ENCODE measurements at regions of chr11 and their contacts with region 1.

Region 1: DNA sequence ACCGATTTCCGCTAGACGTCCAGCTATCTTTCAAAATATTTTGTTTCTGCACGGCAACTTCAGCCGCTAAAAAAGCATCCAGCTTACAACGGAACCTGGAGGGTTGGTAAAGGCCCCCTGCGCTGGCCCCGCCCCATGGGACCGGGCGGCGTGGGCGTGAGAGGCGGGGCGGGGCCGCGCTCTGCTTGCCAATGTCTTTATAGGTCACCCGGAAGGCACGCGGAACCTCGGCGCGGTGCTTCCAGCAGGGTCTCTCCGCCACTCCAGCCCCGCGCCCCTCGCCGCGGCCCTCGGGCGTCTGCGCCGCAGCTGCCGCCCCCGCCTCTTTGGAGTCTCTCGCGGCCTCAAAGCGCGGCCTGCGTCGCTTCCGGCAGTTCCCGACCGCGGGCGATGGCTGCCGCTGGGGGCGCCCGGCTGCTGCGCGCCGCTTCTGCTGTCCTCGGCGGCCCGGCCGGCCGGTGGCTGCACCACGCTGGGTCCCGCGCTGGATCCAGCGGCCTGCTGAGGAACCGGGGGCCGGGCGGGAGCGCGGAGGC is at the start of gene FDX1:
- DNase-seq: peak; percentile 53 to 90 (median 79)
- ATAC-seq: peak; percentile 84
- H3K4me3 ChIP-seq: peak within 1 kb of the TSS; percentile 82 to 91
- H3K4me3 Mint-ChIP-seq: peak within 1 kb of the TSS; percentile 97
- H3K27ac ChIP-seq: peak within 1 kb of the TSS; percentile 72 to 84
- H3K27ac Mint-ChIP-seq: peak within 1 kb of the TSS; percentile 97
- H3K4me1 ChIP-seq: peaks cover 37% of the 10 kb centered on the region
- H3K4me1 Mint-ChIP-seq: peaks cover 44% of the 10 kb centered on the region
- H3K27me3 ChIP-seq: no peaks in the 10 kb centered on the region
- H3K27me3 Mint-ChIP-seq: no peaks in the 10 kb centered on the region
- CTCF ChIP-seq: peak; percentile 58
- total RNA-seq, gene FDX1: 11.7 to 12.5 TPM

Region 2: DNA sequence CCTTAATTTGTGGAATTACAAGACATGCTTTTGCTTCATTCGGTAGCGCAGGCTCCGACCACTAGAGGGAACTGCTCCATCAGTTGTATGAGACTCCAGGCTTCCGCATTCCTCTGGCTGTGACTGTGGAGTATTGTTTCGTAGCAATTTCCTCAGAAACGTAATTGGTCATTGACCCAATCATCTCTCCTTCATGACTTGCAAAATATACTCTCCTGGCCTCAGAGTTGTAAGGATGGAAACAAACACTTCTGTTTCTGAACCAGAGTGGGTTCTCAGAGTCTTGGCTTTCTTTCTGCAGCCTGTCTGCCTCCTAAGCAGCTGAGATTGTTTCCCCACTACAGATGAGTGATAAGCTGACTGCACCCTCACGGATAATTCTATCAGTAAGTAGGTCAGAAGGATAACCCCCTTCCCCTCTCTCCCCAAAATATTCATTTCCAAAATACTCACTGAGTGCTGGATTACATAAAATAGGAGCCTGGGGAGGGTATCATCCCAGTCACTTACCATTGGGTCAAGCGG is 483.4 kb before region 1 on chr11:
- CTCF ChIA-PET with region 1: no interaction called
- POLR2A ChIA-PET with region 1: no interaction called
- intact Hi-C with region 1: loop called (anchors 5 kb)
- DNase-seq: peak in 8 of 9 experiments; percentile 2 to 62 (median 32)
- ATAC-seq: peak; percentile 61
- H3K4me3 ChIP-seq: no peak overlapping the region
- H3K4me3 Mint-ChIP-seq: peak overlapping the region; percentile 69
- H3K27ac ChIP-seq: no peak overlapping the region
- H3K27ac Mint-ChIP-seq: no peak overlapping the region
- H3K4me1 ChIP-seq: no peaks in the 10 kb centered on the region
- H3K4me1 Mint-ChIP-seq: peaks cover 7% of the 10 kb centered on the region
- H3K27me3 ChIP-seq: no peaks in the 10 kb centered on the region
- H3K27me3 Mint-ChIP-seq: peaks cover 2% of the 10 kb centered on the region
- CTCF ChIP-seq: peak; percentile 27

Region 3: DNA sequence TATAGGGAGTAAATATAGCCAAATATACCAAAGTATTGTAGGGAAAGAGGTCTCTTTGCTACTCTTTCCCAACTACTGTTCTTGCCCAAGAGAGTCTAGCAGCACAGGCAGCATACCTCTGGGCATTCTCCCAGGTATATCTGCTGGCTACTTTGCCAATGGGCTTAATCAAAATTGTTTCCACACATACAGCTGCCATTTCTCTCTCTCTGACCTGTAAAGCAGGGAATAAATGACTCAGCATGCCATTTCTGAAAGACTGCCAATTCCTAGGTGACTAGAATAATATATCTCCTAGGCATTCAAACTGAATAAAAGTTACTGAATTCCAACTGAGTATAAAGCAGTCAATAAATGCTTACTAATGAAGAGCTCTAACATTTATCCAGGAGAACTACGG is 178.0 kb before region 1 on chr11:
- CTCF ChIA-PET with region 1: no interaction called
- POLR2A ChIA-PET with region 1: no interaction called
- intact Hi-C with region 1: loop called in 1 of 2 experiments (anchors 5 kb)
- DNase-seq: no peak
- ATAC-seq: no peak
- H3K4me3 ChIP-seq: no peak overlapping the region
- H3K4me3 Mint-ChIP-seq: no peak overlapping the region
- H3K27ac ChIP-seq: no peak overlapping the region
- H3K27ac Mint-ChIP-seq: no peak overlapping the region
- H3K4me1 ChIP-seq: no peaks in the 10 kb centered on the region
- H3K4me1 Mint-ChIP-seq: no peaks in the 10 kb centered on the region
- H3K27me3 ChIP-seq: no peaks in the 10 kb centered on the region
- H3K27me3 Mint-ChIP-seq: no peaks in the 10 kb centered on the region
- CTCF ChIP-seq: no peak

Region 4: DNA sequence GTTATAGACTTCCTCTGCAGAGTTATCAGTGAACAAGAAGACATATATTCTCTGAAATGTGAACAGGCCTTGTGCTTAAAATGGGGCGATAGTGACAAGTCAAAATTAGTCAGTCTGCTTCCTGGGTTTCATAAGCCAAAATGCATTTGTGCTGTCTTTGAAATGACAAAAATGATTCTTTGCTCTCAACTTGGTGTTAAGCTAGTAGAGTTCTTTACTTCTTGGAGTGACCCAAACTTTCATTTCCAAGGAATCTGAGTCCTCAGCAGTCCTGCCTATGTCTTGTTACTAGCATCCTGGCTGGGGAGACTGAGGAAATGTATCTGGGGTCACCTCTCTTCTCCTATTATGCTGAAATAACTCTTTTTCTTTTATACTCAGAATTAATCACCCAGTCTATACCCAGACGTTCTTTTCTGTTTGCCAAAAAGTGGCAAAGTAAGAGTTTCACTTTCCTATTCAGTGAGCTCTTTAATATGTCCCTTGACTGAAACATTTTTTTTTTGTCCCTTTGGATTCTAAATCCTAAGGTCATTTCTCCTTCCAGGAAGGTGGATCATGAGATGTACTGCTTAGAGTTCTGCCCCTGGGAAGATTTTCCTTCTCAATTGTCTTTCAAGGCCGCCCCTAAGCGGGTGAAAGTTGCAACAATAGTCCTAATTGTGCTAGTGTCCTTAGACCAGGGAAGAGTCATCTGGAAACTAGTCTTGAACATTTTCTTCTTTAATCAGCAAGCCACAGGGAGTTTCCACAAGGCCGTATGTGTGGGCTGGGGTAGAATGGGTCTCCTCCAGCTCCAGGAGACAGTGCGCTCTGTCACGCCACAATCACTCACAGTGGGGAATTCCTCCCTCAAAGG is 80.4 kb before region 1 on chr11:
- CTCF ChIA-PET with region 1: no interaction called
- POLR2A ChIA-PET with region 1: no interaction called
- intact Hi-C with region 1: no loop called
- DNase-seq: peak in 2 of 9 experiments; percentile 20 to 46
- ATAC-seq: no peak
- H3K4me3 ChIP-seq: no peak overlapping the region
- H3K4me3 Mint-ChIP-seq: peak overlapping the region; percentile 2
- H3K27ac ChIP-seq: peak overlapping the region in 1 of 2 experiments; percentile 13
- H3K27ac Mint-ChIP-seq: peak overlapping the region; percentile 25
- H3K4me1 ChIP-seq: no peaks in the 10 kb centered on the region
- H3K4me1 Mint-ChIP-seq: peaks cover 25% of the 10 kb centered on the region
- H3K27me3 ChIP-seq: no peaks in the 10 kb centered on the region
- H3K27me3 Mint-ChIP-seq: no peaks in the 10 kb centered on the region
- CTCF ChIP-seq: no peak

Region 5: DNA sequence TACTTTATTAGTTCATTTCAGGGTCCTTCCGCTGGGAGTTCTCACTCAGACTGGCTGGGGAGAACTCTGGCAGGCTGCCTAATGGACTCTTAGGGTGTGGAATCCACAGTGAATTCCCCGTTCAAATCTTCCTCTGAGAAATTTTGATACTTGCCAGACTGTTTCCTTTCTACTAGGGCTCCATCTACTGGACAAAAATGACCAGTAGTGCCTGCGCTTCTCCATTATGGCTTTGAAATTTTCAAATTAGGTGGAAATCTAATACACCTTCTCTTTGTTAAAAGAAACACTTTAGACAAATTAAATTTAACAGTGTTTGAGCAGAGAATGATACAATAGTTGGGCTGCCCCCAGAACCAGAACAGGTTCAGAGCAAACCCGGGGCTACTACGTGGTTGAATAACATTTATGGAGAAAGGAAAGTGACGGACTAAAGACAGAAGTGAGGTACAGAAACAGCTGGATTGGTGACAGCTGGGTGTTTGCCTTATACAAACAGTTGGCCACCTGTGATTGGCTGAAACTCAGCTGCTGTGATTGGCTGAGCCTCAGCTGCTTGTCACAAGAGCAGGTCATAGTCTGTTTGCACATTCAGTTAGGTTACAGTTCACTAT is 53.0 kb before region 1 on chr11:
- CTCF ChIA-PET with region 1: interaction called, 12 read pairs
- POLR2A ChIA-PET with region 1: no interaction called
- intact Hi-C with region 1: loop called (anchors 1 kb)
- DNase-seq: peak in 5 of 9 experiments; percentile 2 to 67 (median 13)
- ATAC-seq: no peak
- H3K4me3 ChIP-seq: no peak overlapping the region
- H3K4me3 Mint-ChIP-seq: no peak overlapping the region
- H3K27ac ChIP-seq: no peak overlapping the region
- H3K27ac Mint-ChIP-seq: no peak overlapping the region
- H3K4me1 ChIP-seq: no peaks in the 10 kb centered on the region
- H3K4me1 Mint-ChIP-seq: peaks cover 4% of the 10 kb centered on the region
- H3K27me3 ChIP-seq: no peaks in the 10 kb centered on the region
- H3K27me3 Mint-ChIP-seq: peaks cover 3% of the 10 kb centered on the region
- CTCF ChIP-seq: peak; percentile 77

Region 6: GRCh38 chr11:111601979-111602864 is 1172.4 kb after region 1 on chr11 and contains the start of gene SIK2:
- CTCF ChIA-PET with region 1: no interaction called
- POLR2A ChIA-PET with region 1: no interaction called
- intact Hi-C with region 1: loop called in 1 of 2 experiments (anchors 2 kb)
- DNase-seq: peak; percentile 78 to 96 (median 90)
- ATAC-seq: peak; percentile 83
- H3K4me3 ChIP-seq: peak within 1 kb of the TSS; percentile 70 to 95
- H3K4me3 Mint-ChIP-seq: peak within 1 kb of the TSS; percentile 94
- H3K27ac ChIP-seq: peak within 1 kb of the TSS; percentile 77 to 94
- H3K27ac Mint-ChIP-seq: peak within 1 kb of the TSS; percentile 94
- H3K4me1 ChIP-seq: peaks cover 24% of the 10 kb centered on the region
- H3K4me1 Mint-ChIP-seq: peaks cover 27% of the 10 kb centered on the region
- H3K27me3 ChIP-seq: no peaks in the 10 kb centered on the region
- H3K27me3 Mint-ChIP-seq: no peaks in the 10 kb centered on the region
- CTCF ChIP-seq: peak; percentile 57
- total RNA-seq, gene SIK2: 2.9 to 3.2 TPM

Region 7: GRCh38 chr11:112074026-112074811 is 1644.4 kb after region 1 on chr11 and contains the start of gene NKAPD1:
- CTCF ChIA-PET with region 1: no interaction called
- POLR2A ChIA-PET with region 1: no interaction called
- intact Hi-C with region 1: loop called in 1 of 2 experiments (anchors 10 kb)
- DNase-seq: peak; percentile 64 to 92 (median 82)
- ATAC-seq: peak; percentile 79
- H3K4me3 ChIP-seq: peak within 1 kb of the TSS; percentile 79 to 87
- H3K4me3 Mint-ChIP-seq: peak within 1 kb of the TSS; percentile 96
- H3K27ac ChIP-seq: peak within 1 kb of the TSS; percentile 70 to 80
- H3K27ac Mint-ChIP-seq: peak within 1 kb of the TSS; percentile 95
- H3K4me1 ChIP-seq: peaks cover 12% of the 10 kb centered on the region
- H3K4me1 Mint-ChIP-seq: peaks cover 33% of the 10 kb centered on the region
- H3K27me3 ChIP-seq: no peaks in the 10 kb centered on the region
- H3K27me3 Mint-ChIP-seq: peaks cover 7% of the 10 kb centered on the region
- CTCF ChIP-seq: no peak
- total RNA-seq, gene NKAPD1: 16.3 to 17.0 TPM

Measured in CD8-positive, alpha-beta T cell (primary cell).